Right ventricle myocardium inferior (tissue), 1 donor: ENCODE measurements at regions of chr12 and their contacts with region 1.

Region 1: GRCh38 chr12:130041983-130042812 is 120.1 kb upstream of the FZD10 start:
- DNase-seq: peak; percentile 65
- ATAC-seq: no peak

Region 2: GRCh38 chr12:129949651-129950050 is 92.5 kb before region 1 on chr12:
- intact Hi-C with region 1: no loop called
- DNase-seq: no peak
- ATAC-seq: no peak

Region 3: GRCh38 chr12:130335517-130336392 is 293.6 kb after region 1 on chr12:
- intact Hi-C with region 1: loop called (anchors 1 kb)
- DNase-seq: no peak
- ATAC-seq: no peak

Region 4: DNA sequence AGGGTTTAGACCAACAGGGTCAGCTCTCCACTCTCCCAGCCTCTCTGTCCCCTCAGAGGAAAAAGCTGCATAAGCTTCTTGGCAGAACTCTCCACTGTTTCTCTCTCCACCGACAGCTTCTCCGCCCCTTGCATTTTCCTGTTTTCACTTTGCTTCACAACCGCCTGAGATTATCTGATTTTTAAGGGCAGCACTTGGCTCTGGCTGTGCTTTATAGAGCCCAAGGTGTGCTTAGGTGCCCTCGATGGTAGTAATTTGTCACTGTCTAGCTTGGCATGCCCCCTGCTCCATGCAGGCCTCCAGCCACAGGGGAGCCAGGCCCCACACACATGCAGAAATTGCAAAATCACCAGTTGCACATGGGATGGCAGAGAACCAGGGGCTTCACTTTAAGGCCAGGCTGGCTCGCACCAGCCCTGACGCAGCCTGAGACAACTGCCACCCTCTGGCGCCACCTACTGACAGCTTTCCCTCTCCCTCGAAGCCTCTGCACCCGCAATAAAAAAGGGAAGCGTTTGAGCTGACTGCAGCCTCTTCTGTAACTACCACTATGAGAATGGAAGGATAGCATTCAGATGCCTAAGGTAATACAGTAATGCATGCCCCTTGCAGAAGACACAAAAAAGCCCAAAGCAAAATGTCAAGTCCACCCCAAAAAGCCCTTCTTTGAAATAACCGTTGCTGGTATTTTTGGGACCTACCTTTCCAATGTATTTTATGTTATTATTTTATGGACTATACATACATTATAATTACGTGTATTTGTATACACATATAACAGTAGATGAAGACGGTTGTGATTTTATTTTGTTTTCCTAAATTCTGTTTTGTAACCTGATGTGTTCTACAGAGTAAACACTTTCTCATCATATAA is 705.9 kb after region 1 on chr12:
- intact Hi-C with region 1: loop called (anchors 10 kb)
- DNase-seq: peak; percentile 80
- ATAC-seq: peak; percentile 93